ENCODE measurements at regions of chr15 and their contacts with region 1.

Region 1: DNA sequence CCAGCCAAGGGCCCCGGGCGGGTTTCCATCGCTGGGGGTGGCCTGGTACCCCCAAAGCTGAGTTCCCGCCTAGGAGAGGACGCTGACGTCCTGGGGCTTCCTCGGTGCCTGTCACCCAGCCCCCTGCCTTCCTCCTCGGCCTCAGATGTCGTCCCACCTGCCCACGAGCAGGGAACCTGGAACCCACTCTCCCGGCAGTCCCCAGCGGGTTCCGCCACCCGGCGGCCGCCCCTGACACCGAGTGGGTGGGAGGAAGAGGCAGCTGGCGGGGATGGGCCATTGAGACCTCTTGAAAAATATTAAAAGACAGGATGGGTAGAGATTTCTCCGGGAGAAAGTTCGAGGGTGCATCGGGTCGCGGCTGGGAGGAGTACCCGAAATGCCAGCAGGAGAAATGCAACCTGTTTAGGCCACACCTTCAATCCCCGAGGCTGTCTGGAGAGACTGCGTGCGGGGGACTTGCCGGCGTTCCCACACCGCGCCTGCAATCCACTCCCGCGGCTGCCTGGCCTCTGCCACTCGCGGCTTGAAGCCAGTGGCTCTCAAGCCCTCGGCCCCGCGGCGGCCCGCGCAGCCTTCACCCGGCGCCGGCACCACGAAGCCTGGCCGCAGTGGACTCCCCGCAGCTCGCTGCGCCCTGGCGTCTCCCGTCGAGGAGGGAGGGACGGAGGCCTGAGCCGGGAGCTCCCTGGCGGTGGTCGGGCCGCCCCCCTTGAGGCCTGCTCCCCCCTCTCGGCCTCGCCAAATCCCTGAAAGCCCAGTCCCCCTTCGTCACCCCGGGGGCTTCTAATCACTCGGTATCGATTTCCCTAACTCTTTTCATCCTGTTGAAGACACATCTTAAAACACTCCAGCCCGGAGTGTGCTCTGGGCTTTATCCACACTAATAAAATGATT is 8.6 kb upstream of the NR2F2 start:
- DNase-seq: peak; percentile 68 to 81 (median 73)
- H3K4me3 ChIP-seq: peak overlapping the region; percentile 73
- H3K27ac ChIP-seq: peak overlapping the region; percentile 82 to 98
- H3K4me1 ChIP-seq: peaks cover 6% of the 10 kb centered on the region
- H3K27me3 ChIP-seq: no peaks in the 10 kb centered on the region
- CTCF ChIP-seq: peak in 2 of 3 donors; percentile 6 to 25
- EP300 ChIP-seq: no peak
- POLR2A ChIP-seq: peak; percentile 18

Region 2: GRCh38 chr15:95932676-95933075 is 389.2 kb before region 1 on chr15:
- intact Hi-C with region 1: loop called in 1 of 4 experiments (anchors 5 kb)
- DNase-seq: no peak
- H3K4me3 ChIP-seq: no peak overlapping the region
- H3K27ac ChIP-seq: peak overlapping the region in 1 of 2 donors; percentile 68
- H3K4me1 ChIP-seq: peaks cover 32% of the 10 kb centered on the region
- H3K27me3 ChIP-seq: no peaks in the 10 kb centered on the region
- CTCF ChIP-seq: no peak
- EP300 ChIP-seq: no peak
- POLR2A ChIP-seq: no peak

Region 3: GRCh38 chr15:96160269-96160668 is 161.6 kb before region 1 on chr15:
- intact Hi-C with region 1: loop called in 3 of 4 experiments (anchors 5 to 10 kb)
- DNase-seq: peak; percentile 64 to 82 (median 74)
- H3K4me3 ChIP-seq: no peak overlapping the region
- H3K27ac ChIP-seq: peak overlapping the region; percentile 3 to 64
- H3K4me1 ChIP-seq: peaks cover 12% of the 10 kb centered on the region
- H3K27me3 ChIP-seq: no peaks in the 10 kb centered on the region
- CTCF ChIP-seq: no peak
- EP300 ChIP-seq: no peak
- POLR2A ChIP-seq: no peak